Posterior vena cava (tissue), 2 donors: ENCODE measurements at regions of chr12 and their contacts with region 1.

Region 1: DNA sequence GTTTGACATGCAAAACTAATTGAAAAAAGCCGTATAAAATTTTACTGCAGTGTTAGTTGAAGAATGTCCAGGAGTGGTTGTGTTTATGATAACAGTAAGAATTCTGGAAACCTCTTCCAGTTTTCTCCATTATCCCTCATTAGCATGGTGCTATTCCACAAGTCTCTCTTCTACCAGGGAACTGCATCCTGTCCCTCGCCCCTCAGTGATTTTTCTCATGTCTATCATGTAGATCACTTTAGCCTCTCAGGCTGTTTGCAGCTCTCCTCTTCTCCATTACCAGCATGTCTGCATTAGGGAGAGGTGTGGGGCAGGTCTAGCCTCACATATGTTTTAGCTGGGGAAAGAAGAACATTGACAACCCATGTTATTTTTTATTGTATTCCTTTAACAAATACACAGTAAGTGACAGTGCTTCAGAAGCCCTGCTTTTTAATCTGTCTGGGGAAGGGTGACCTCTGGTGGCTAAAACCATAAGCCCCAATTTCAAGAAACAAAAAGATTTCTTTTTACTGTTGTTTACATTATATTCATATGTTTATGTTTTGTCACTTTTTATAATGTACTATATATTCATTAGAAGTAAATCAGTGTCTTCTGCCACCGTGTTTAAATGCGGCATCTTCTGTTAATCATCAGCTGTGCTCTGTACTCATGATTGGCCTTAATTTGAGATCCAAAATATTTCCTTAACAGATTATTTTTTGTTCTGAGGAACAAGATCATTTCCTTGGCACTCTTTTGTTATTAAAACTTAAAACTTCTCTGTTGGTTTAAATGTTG is 70.7 kb downstream of the RASSF8 start:
- DNase-seq: no peak

Region 2: DNA sequence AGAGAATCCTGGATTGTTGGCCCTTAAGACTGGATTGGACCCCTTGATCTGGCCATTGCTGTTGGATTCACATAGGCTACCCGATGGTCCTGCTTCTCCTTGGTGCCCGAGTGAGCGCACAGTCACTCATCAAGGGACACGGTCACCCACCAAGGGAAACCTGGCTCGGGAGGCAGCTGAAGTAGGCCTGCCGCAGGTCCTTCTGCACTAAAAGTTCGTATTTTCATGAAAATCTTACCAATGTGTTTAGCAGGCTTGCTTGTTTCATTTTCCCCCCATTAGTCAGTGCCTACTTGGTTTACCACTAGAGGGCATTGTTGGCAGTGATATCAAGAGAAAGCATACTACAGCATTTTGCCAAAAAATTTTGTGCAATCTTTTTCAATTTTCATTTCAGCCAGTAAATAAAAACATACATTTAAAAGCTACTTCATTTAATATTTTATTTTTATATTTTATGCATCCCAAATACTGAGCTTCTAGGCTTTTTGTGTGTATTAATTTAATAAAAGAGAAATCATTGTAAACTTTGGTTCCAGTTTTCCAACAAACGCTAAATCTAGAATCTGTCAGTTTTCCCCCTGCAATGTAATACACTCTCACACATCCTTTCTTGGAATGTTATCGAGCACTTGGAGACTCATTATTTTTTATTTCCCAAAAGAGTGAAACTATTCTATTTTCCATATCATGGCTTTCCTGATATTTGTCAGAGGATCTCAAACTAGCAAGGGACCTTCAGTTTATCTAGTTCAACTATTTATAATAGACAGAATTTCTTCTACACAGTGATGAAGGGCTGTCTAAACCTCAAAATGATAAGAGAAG is 592.7 kb before region 1 on chr12:
- intact Hi-C with region 1: loop called (anchors 10 kb)
- DNase-seq: no peak

Region 3: GRCh38 chr12:25447046-25447445 is 582.1 kb before region 1 on chr12:
- intact Hi-C with region 1: loop called in 1 of 2 experiments (anchors 10 kb)
- DNase-seq: no peak

Region 4: GRCh38 chr12:25960143-25960542 is 69.0 kb before region 1 on chr12:
- intact Hi-C with region 1: loop called in 1 of 2 experiments (anchors 10 kb)
- DNase-seq: no peak

Region 5: GRCh38 chr12:25979563-25979962 is 49.6 kb before region 1 on chr12:
- intact Hi-C with region 1: no loop called
- DNase-seq: no peak